ENCODE measurements at regions of chr15 and their contacts with region 1.

Region 1: DNA sequence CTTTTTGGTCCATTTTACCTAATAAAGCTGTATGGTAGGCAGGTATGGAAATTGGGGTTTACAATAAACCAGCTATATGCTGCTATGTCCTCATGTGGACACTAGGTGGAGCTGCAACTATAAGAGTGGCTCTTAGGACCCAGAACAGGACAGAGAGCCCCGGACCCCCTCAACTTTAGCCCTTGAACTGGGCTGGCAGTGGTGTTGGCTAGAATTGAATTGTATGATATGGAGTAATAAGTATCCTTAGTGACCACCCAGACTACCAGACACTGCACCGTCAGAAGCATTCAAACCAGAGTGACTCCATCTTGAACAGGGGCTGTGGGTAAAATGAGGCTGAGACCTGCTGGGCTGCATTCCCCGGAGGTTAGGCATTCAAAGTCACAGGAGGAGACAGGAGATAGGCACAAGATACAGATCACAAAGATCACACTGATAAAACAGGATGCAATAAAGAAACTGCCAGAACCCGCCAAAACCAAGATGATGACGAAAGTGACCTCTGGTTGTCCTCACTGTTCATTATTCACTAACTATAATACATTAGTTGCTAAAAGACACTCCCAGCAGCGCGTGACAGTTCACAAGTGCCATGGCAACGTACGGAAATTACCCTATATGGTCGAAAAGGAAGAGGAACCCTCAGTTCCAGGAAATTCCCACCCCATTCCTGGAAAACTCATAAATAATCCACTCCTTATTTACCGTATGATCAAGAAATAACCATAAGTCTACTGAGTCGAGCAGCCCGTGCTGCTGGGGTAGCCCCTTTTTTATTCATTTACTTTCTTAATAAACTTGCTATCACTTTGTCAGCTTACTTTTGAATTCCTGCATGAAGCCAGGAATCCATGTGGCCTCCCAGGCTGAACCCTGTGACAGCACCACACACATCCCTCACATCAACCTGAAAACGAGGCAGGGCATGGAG is 68.7 kb upstream of the BLM start:
- DNase-seq: peak; percentile 79
- ATAC-seq: peak; percentile 86

Region 2: DNA sequence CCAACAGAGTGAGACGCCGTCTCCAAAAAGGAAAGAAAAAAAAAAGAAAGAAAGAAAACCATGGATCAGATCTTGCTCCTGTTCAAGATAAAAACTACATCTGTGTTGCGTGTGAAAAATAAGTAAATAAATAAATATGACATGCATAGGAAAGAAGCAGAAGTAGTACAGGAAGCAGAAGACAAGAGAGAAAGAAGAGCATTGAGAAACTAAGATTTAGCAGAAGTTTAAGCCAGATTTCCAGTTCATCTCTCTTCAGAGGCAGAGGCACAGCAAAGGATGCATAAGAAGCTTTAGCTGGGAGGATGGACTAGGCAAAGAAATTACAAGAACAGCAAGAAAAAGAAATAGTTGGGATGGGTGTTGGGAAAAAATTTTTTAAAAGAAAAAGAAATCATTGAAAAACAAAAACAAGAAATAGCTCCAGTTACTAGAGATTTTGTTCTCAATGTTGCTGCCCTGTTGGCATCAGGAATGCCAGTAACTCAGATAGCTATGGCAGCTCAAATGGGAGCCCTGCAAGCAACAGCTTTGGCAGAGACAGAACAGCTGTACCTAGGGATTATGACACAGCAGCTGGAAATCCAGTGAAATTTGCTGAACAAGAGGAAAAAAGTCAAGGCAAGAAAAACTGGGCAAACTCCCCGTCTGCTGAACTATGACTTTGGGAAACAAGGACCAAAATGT is 771.9 kb before region 1 on chr15:
- intact Hi-C with region 1: no loop called
- DNase-seq: no peak
- ATAC-seq: no peak

Region 3: GRCh38 chr15:90529371-90530249 is 118.8 kb before region 1 on chr15 and contains the start of gene CRTC3:
- intact Hi-C with region 1: no loop called
- DNase-seq: peak; percentile 74
- ATAC-seq: peak; percentile 92
- total RNA-seq, gene CRTC3: 27.2 TPM

Region 4: DNA sequence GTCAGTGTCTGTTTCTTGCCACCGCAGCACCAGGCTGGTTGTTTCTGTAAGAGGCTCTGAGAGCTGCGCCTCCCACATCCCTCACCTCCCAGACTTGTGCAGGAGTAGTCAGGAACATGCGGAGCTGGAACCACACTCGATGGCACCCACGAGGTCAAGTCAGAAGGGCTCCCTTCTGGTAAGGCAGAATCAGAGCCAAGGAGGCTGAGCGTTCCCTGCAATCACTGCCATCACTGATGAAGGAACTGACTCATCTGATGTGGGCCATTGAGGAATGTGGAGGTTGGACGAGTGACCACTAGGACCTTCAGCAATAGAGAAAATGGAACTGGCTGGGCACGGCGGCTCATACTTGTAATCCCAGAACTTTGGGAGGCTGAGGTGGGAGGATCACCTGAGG is 33.1 kb after region 1 on chr15:
- intact Hi-C with region 1: no loop called
- DNase-seq: no peak
- ATAC-seq: no peak

Region 5: GRCh38 chr15:90691982-90692773 is 43.8 kb after region 1 on chr15:
- intact Hi-C with region 1: loop called (anchors 2 kb)
- DNase-seq: no peak
- ATAC-seq: no peak

Region 6: GRCh38 chr15:90742087-90742486 is 93.7 kb after region 1 on chr15:
- intact Hi-C with region 1: no loop called
- DNase-seq: no peak
- ATAC-seq: no peak

Region 7: DNA sequence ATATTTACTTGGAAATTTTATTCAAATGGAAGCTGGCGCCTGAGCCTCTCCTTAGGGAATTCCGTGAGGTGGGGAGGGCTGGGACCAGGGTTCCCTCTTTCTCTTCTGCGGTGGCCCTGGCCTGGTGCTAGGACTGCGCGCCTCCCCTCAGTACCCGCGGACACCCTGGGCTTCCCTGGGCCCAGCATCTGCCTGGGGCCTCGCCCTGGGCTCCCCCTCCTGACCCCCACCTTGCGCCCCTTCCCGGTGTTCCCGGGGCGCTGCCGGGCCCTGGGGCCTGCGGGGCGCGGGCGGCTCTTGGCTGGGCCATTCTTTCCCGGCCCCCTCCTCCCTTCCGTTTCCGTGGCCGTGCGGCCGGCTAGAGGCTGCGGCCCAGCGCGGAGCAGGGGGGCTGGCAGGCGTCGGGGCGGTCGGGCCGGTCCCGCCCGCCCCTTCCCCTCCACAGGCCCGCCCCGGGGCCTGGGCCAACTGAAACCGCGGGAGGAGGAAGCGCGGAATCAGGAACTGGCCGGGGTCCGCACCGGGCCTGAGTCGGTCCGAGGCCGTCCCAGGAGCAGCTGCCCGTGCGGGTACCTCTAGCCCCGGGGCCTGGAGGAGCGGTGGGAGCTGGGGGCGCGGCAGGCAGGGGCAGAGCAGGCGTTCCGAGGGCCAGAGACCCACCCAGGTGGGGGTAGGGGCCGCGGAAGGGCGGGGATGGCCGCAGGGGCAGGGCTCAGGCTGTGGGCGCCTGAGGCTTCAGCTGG is 235.7 kb after region 1 on chr15 and contains the start of gene FES:
- intact Hi-C with region 1: loop called (anchors 2 kb)
- DNase-seq: peak; percentile 88
- ATAC-seq: peak; percentile 77
- total RNA-seq, gene FES: 17.1 TPM

Measured in Right ventricle myocardium superior (tissue), 1 donor.